ENCODE measurements at regions of chr15 and their contacts with region 1.

Region 1: DNA sequence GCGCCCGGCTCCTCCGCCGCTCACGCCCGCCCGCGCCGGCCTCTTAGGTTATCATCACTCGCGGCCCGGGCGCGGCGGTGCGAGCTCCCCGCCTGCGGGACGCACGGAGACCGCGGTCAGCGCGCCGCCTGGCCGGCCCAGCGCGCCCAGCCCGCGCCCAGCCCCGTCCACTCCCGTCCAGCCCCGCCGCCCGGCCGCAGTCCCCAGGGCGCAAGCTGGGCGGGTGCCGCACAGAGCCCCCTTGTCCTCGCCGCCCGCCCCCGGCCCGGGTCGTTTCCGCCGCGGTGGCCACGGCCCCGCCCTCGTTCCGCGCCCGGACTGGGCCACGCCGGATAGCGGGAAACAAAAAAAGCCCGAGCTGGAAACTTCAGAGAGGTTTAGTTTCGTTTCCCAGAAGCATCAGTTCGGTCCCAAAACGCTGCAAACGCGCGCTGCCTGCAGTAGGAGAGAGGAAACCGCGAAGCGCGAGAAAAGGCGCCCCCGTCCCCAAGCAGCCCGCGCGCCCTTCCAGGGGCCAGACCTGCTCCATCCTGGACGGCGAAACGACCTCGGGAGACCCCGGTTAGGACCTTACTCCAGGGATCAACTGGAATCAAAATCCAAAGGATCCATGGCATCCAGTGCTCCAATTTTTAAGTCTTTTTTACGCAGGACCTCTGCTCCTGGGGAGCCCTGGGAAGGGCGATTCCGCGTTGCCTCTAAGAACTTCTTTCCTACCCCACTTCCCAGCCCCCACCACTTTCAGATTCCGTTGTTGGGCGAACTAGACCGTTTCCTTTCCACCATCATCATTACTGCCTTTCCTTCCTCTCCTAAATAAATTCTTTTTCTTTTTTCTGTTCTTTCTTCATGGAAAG is at the start of gene ATP10A:
- DNase-seq: peak in 6 of 9 experiments; percentile 44 to 73 (median 55)
- ATAC-seq: no peak
- H3K4me3 ChIP-seq: peak within 1 kb of the TSS; percentile 82 to 90
- H3K4me3 Mint-ChIP-seq: peak within 1 kb of the TSS; percentile 95
- H3K27ac ChIP-seq: peak within 1 kb of the TSS; percentile 67 to 86
- H3K27ac Mint-ChIP-seq: peak within 1 kb of the TSS; percentile 98
- H3K4me1 ChIP-seq: peaks cover 30% of the 10 kb centered on the region
- H3K4me1 Mint-ChIP-seq: peaks cover 36% of the 10 kb centered on the region
- H3K27me3 ChIP-seq: no peaks in the 10 kb centered on the region
- H3K27me3 Mint-ChIP-seq: no peaks in the 10 kb centered on the region
- CTCF ChIP-seq: no peak
- total RNA-seq, gene ATP10A: 17.6 to 18.5 TPM

Region 2: GRCh38 chr15:25783607-25784540 is 79.5 kb before region 1 on chr15:
- CTCF ChIA-PET with region 1: interaction called, 11 read pairs
- POLR2A ChIA-PET with region 1: interaction called, 4 read pairs
- intact Hi-C with region 1: loop called in 1 of 2 experiments (anchors 2 kb)
- DNase-seq: peak in 8 of 9 experiments; percentile 18 to 71 (median 50)
- ATAC-seq: peak; percentile 48
- H3K4me3 ChIP-seq: no peak overlapping the region
- H3K4me3 Mint-ChIP-seq: no peak overlapping the region
- H3K27ac ChIP-seq: no peak overlapping the region
- H3K27ac Mint-ChIP-seq: peak overlapping the region; percentile 32
- H3K4me1 ChIP-seq: peaks cover 4% of the 10 kb centered on the region
- H3K4me1 Mint-ChIP-seq: peaks cover 24% of the 10 kb centered on the region
- H3K27me3 ChIP-seq: no peaks in the 10 kb centered on the region
- H3K27me3 Mint-ChIP-seq: no peaks in the 10 kb centered on the region
- CTCF ChIP-seq: peak; percentile 32

Region 3: GRCh38 chr15:25811481-25811906 is 51.8 kb before region 1 on chr15:
- CTCF ChIA-PET with region 1: interaction called, 8 read pairs
- POLR2A ChIA-PET with region 1: interaction called, 3 read pairs
- intact Hi-C with region 1: loop called (anchors 2 to 5 kb)
- DNase-seq: peak in 3 of 9 experiments; percentile 30 to 64 (median 44)
- ATAC-seq: peak; percentile 32
- H3K4me3 ChIP-seq: peak overlapping the region; percentile 13 to 27
- H3K4me3 Mint-ChIP-seq: peak overlapping the region; percentile 63
- H3K27ac ChIP-seq: peak overlapping the region in 1 of 2 experiments; percentile 39
- H3K27ac Mint-ChIP-seq: peak overlapping the region; percentile 77
- H3K4me1 ChIP-seq: peaks cover 52% of the 10 kb centered on the region
- H3K4me1 Mint-ChIP-seq: peaks cover 62% of the 10 kb centered on the region
- H3K27me3 ChIP-seq: no peaks in the 10 kb centered on the region
- H3K27me3 Mint-ChIP-seq: no peaks in the 10 kb centered on the region
- CTCF ChIP-seq: no peak

Region 4: GRCh38 chr15:25850154-25851111 is 12.9 kb before region 1 on chr15:
- CTCF ChIA-PET with region 1: interaction called, 10 read pairs
- POLR2A ChIA-PET with region 1: interaction called, 54 read pairs
- intact Hi-C with region 1: loop called (anchors 1 kb)
- DNase-seq: peak in 8 of 9 experiments; percentile 63 to 86 (median 74)
- ATAC-seq: peak; percentile 54
- H3K4me3 ChIP-seq: peak overlapping the region; percentile 45 to 53
- H3K4me3 Mint-ChIP-seq: peak overlapping the region; percentile 91
- H3K27ac ChIP-seq: peak overlapping the region; percentile 72 to 88
- H3K27ac Mint-ChIP-seq: peak overlapping the region; percentile 98
- H3K4me1 ChIP-seq: peaks cover 80% of the 10 kb centered on the region
- H3K4me1 Mint-ChIP-seq: peaks cover 86% of the 10 kb centered on the region
- H3K27me3 ChIP-seq: no peaks in the 10 kb centered on the region
- H3K27me3 Mint-ChIP-seq: no peaks in the 10 kb centered on the region
- CTCF ChIP-seq: no peak

Region 5: GRCh38 chr15:25905140-25905539 is 41.8 kb after region 1 on chr15:
- CTCF ChIA-PET with region 1: no interaction called
- POLR2A ChIA-PET with region 1: no interaction called
- intact Hi-C with region 1: loop called in 1 of 2 experiments (anchors 5 kb)
- DNase-seq: no peak
- ATAC-seq: no peak
- H3K4me3 ChIP-seq: no peak overlapping the region
- H3K4me3 Mint-ChIP-seq: no peak overlapping the region
- H3K27ac ChIP-seq: no peak overlapping the region
- H3K27ac Mint-ChIP-seq: no peak overlapping the region
- H3K4me1 ChIP-seq: peaks cover 19% of the 10 kb centered on the region
- H3K4me1 Mint-ChIP-seq: peaks cover 15% of the 10 kb centered on the region
- H3K27me3 ChIP-seq: peaks cover 0 to 2% of the 10 kb centered on the region in 2 experiments
- H3K27me3 Mint-ChIP-seq: no peaks in the 10 kb centered on the region
- CTCF ChIP-seq: no peak

Region 6: DNA sequence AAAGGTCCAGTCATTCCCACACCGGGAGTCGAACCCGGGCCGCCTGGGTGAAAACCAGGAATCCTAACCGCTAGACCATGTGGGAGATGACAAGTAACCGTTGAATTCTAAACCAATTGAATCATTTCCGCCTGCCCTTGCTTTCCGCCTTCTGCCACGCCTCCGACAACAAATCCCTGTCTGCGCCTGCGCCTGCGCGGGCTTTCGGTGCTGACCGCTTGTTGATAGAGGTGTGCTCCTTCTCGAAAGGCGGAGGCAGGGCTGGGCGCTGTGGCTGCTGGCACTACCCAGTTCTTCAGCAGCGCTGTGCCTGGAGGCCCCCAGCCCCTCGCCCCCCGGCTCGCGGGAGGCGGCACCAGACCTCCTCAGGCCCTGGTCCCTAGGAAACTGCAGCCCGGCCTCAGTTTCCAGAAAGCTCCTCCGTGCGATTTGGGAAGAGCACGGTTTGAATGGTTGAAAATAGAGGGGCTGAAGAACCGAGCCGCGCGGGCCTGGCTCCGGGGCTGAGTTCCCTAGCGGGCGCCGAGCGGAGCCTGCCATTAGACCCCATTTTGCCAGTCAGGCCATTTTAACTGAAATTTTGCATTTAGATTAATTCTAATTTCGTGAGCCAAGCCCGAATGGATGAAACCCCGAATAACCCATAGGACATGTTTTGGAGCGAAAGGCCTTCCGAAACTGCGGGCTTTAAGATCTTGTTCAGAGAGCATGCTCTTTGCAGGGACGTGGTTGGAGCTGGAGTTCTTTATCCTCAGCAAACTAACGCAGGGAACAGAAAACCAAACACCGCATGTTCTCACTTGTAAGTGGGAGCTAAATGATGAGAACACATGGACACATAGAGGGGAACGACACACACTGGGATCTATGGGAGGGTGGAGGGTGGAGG is 219.1 kb after region 1 on chr15:
- CTCF ChIA-PET with region 1: no interaction called
- POLR2A ChIA-PET with region 1: no interaction called
- intact Hi-C with region 1: loop called in 1 of 2 experiments (anchors 5 kb)
- DNase-seq: peak; percentile 86 to 96 (median 94)
- ATAC-seq: peak; percentile 96
- H3K4me3 ChIP-seq: peak overlapping the region; percentile 74 to 81
- H3K4me3 Mint-ChIP-seq: peak overlapping the region; percentile 91
- H3K27ac ChIP-seq: peak overlapping the region; percentile 70 to 71
- H3K27ac Mint-ChIP-seq: peak overlapping the region; percentile 94
- H3K4me1 ChIP-seq: peaks cover 14% of the 10 kb centered on the region
- H3K4me1 Mint-ChIP-seq: peaks cover 48% of the 10 kb centered on the region
- H3K27me3 ChIP-seq: no peaks in the 10 kb centered on the region
- H3K27me3 Mint-ChIP-seq: peaks cover under 1% of the 10 kb centered on the region
- CTCF ChIP-seq: no peak

Region 7: GRCh38 chr15:26773069-26773877 is 909.9 kb after region 1 on chr15:
- CTCF ChIA-PET with region 1: no interaction called
- POLR2A ChIA-PET with region 1: no interaction called
- intact Hi-C with region 1: no loop called
- DNase-seq: no peak
- ATAC-seq: no peak
- H3K4me3 ChIP-seq: no peak overlapping the region
- H3K4me3 Mint-ChIP-seq: peak overlapping the region; percentile 13
- H3K27ac ChIP-seq: no peak overlapping the region
- H3K27ac Mint-ChIP-seq: no peak overlapping the region
- H3K4me1 ChIP-seq: no peaks in the 10 kb centered on the region
- H3K4me1 Mint-ChIP-seq: peaks cover 2% of the 10 kb centered on the region
- H3K27me3 ChIP-seq: no peaks in the 10 kb centered on the region
- H3K27me3 Mint-ChIP-seq: peaks cover 43% of the 10 kb centered on the region
- CTCF ChIP-seq: no peak

Measured in CD8-positive, alpha-beta T cell (primary cell).